Heart right ventricle (tissue), 16 donors: ENCODE measurements at regions of chr20 and their contacts with region 1.

Region 1: DNA sequence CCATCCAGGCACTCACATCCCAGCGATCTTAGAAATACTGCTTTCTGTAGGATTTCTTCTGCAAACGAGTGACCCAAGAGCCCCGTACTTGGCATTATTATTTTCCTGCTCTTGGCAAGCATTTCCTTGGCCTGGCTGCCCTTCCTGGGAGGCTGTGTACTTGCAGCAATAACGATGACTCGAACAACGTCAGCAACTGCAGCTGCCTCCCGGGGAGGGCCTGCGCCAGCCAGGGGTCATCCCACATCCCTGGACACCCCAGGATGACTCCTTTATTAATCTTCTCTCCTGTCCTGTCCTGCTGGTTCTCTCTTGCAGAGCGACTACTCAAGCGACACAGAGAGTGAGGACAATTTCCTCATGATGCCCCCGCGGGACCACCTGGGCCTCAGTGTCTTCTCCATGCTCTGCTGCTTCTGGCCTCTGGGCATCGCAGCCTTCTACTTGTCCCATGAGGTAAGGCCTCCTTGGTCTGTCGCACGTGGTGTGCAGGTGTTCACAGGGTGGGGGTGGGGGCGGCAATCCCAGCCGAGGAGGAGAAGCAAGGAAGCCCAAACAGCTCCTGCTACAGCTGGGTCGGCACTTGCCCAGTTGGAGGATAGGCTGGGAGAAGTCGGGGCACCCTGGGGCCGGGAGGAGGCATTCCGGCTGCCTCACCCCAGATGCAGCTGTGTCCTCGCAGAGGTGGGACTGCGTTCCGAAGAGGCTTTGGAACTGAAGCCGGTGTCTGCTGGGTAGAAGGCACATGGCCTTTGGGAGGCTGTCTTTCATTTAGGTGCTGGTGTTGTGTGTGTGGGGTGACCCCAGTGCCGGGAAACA is 115.3 kb downstream of the SYNDIG1 start:
- DNase-seq: no peak
- ATAC-seq: no peak
- H3K4me3 ChIP-seq: no peak overlapping the region
- H3K27ac ChIP-seq: no peak overlapping the region
- H3K4me1 ChIP-seq: peaks cover 0 to 6% (median 0%) of the 10 kb centered on the region in 9 donors
- H3K27me3 ChIP-seq: no peaks in the 10 kb centered on the region
- CTCF ChIP-seq: no peak

Region 2: GRCh38 chr20:24208614-24209013 is 376.1 kb before region 1 on chr20:
- intact Hi-C with region 1: no loop called
- DNase-seq: no peak
- ATAC-seq: no peak
- H3K4me3 ChIP-seq: no peak overlapping the region
- H3K27ac ChIP-seq: no peak overlapping the region
- H3K4me1 ChIP-seq: no peaks in the 10 kb centered on the region
- H3K27me3 ChIP-seq: peaks cover 0 to 29% (median 18%) of the 10 kb centered on the region in 7 donors
- CTCF ChIP-seq: no peak

Region 3: GRCh38 chr20:24662752-24663365 is 78.1 kb after region 1 on chr20:
- intact Hi-C with region 1: loop called in 1 of 10 experiments (anchors 10 kb)
- DNase-seq: no peak
- ATAC-seq: no peak
- H3K4me3 ChIP-seq: no peak overlapping the region
- H3K27ac ChIP-seq: no peak overlapping the region
- H3K4me1 ChIP-seq: peaks cover 0 to 6% (median 0%) of the 10 kb centered on the region in 9 donors
- H3K27me3 ChIP-seq: no peaks in the 10 kb centered on the region
- CTCF ChIP-seq: no peak